Activated CD8-positive, alpha-beta T cell treated with anti-CD3 and anti-CD28 coated beads for 36 hours (primary cell): ENCODE measurements at regions of chr18 and their contacts with region 1.

Region 1: DNA sequence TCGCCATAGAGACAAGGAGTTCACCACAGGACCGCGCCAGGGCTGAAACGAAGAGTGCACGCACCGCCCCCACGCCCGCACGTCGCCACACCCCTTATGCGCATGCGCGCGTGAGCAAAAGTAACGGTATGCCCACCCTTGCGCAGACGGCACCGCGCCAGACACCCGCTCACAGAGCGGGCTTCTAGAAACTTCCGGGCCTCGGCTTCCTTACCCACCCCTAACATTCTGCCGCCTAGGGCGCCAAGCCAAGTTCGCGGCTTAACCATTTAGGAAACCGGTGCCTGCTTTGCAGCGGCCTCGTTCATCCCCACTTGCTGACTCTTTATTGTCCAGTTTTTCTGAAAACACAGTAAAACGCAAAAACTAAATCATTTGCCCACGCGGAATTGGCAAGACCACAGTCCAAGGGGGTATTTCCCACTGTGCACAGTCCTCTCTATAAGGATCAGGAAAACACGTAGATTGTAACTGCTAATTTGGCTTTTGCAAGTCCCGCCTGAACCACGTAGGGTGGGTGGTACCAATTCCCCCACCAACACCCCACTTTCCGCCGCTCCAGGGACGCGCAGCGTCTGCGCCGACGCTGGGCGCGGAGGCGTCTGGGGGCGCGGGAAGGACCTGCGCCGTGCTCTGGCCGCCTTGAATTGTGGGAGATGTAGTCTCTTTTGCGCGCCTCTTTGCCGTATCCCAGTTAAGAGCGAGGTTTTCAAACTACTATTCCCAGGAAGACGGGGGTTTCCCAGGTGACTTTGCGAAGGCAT is at the starts of genes FBXO15 and TIMM21:
- DNase-seq: peak; percentile 99
- ATAC-seq: peak; percentile 87
- H3K4me3 Mint-ChIP-seq: peak within 1 kb of the TSS; percentile 98
- H3K27ac Mint-ChIP-seq: peak within 1 kb of the TSS; percentile 99
- H3K4me1 Mint-ChIP-seq: peaks cover 43% of the 10 kb centered on the region
- H3K27me3 Mint-ChIP-seq: peaks cover 2% of the 10 kb centered on the region
- CTCF ChIP-seq: no peak
- total RNA-seq, gene FBXO15: 2.1 TPM
- total RNA-seq, gene TIMM21: 70.2 to 71.2 TPM

Region 2: DNA sequence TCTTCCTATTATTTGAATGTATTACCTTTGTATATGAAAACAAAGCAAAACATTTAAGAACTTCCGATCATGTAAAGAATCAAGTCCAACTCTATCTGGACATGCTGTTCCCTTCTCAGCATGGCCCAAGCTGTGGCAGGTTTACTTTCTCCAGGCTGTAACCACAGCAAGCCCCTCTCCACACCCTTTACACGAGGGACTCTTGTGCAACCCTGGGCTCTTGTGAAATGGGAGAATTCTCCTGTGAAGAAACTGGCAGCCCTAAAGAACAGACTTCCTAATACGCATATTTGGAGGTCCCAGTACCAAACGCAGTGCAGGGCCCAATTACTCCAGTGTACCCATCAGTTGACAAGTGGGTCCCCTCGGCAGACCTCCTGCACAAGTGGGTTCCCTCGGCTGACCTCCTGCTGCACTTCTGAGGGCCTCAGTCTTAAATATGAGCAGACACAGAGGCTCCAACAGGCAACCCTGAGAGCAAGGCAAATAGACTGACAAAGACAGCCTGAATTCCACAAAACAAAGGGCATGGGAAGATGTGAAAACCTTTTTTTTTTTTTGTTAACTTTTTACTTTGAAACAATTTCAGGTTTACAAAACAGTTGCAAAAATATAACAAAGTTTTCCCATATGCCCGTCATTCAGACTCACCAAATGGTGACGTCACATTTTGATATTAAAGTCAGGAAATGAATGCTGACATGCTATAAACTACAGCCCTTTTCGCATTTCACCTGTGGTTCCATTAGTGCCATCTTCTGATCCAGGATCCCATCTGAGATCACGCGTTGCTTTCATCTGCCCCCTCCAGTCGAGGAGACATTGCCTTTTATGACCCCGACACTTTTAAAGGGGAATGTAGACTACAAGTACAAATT is 78.5 kb before region 1 on chr18:
- CTCF ChIA-PET with region 1: interaction called, 3 read pairs
- POLR2A ChIA-PET with region 1: no interaction called
- intact Hi-C with region 1: loop called (anchors 5 kb)
- DNase-seq: no peak
- ATAC-seq: no peak
- H3K4me3 Mint-ChIP-seq: no peak overlapping the region
- H3K27ac Mint-ChIP-seq: no peak overlapping the region
- H3K4me1 Mint-ChIP-seq: peaks cover 26% of the 10 kb centered on the region
- H3K27me3 Mint-ChIP-seq: no peaks in the 10 kb centered on the region
- CTCF ChIP-seq: no peak